IMR-90 (cell line): ENCODE measurements at regions of chr12 and their contacts with region 1.

Region 1: GRCh38 chr12:96219698-96220206 is 25.6 kb downstream of the ELK3 start:
- DNase-seq: peak; percentile 98
- ATAC-seq: peak; percentile 96
- H3K4me3 ChIP-seq: no peak overlapping the region
- H3K27ac ChIP-seq: peak overlapping the region; percentile 83
- H3K4me1 ChIP-seq: peaks cover 14% of the 10 kb centered on the region
- H3K27me3 ChIP-seq: no peaks in the 10 kb centered on the region
- CTCF ChIP-seq: no peak
- POLR2A ChIP-seq: peak; percentile 60; the same call in 1 of the 2 replicates
- RAD21 ChIP-seq: peak; percentile 27

Region 2: GRCh38 chr12:95623585-95624042 is 596.1 kb before region 1 on chr12:
- CTCF ChIA-PET with region 1: no interaction called
- POLR2A ChIA-PET with region 1: no interaction called
- dilution Hi-C with region 1: no loop called
- in situ Hi-C with region 1: loop called (anchors 25 kb)
- intact Hi-C with region 1: no loop called
- DNase-seq: peak; percentile 89
- ATAC-seq: peak; percentile 95
- H3K4me3 ChIP-seq: no peak overlapping the region
- H3K27ac ChIP-seq: peak overlapping the region; percentile 31; the same call in 1 of the 2 replicates
- H3K4me1 ChIP-seq: peaks cover 3% of the 10 kb centered on the region
- H3K27me3 ChIP-seq: no peaks in the 10 kb centered on the region
- CTCF ChIP-seq: peak; percentile 77
- POLR2A ChIP-seq: no peak
- RAD21 ChIP-seq: peak; percentile 73

Region 3: GRCh38 chr12:95918194-95918993 is 301.4 kb before region 1 on chr12:
- CTCF ChIA-PET with region 1: no interaction called
- POLR2A ChIA-PET with region 1: no interaction called
- dilution Hi-C with region 1: no loop called
- in situ Hi-C with region 1: no loop called
- intact Hi-C with region 1: loop called (anchors 2 kb)
- DNase-seq: peak; percentile 42
- ATAC-seq: peak; percentile 98
- H3K4me3 ChIP-seq: no peak overlapping the region
- H3K27ac ChIP-seq: no peak overlapping the region
- H3K4me1 ChIP-seq: no peaks in the 10 kb centered on the region
- H3K27me3 ChIP-seq: peaks cover 7% of the 10 kb centered on the region
- CTCF ChIP-seq: peak; percentile 73
- POLR2A ChIP-seq: no peak
- RAD21 ChIP-seq: peak; percentile 66

Region 4: DNA sequence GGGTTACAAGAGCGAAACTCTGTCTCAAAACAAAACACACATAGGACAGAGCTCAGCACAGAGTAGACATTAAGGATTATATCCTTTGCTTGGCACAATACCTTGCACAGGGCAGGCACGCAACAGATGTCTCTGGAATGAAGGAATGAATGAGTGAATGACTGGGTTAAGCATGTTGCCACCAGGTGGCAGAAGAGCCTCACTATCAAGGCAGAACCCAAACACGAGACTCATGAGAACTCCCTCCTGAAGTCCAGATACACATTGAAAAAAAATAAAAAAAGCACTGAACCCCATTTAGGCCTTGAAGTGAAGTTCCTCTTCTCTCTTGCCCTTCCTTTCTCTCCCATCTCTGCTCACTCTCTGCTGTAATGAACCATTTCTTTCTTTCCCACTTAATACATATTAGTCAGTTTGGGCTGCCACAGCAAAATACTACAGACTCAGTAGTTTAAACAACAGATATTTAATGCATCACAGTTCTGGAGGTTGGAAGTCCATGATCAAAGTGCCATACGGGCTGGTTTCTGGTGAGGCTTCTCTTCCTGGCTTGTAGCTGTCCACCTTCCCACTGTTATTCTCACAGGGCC is 157.8 kb before region 1 on chr12:
- CTCF ChIA-PET with region 1: interaction called, 26 read pairs
- POLR2A ChIA-PET with region 1: no interaction called
- dilution Hi-C with region 1: no loop called
- in situ Hi-C with region 1: loop called (anchors 5 kb)
- intact Hi-C with region 1: loop called (anchors 1 kb)
- DNase-seq: peak; percentile 87
- ATAC-seq: peak; percentile 95
- H3K4me3 ChIP-seq: no peak overlapping the region
- H3K27ac ChIP-seq: no peak overlapping the region
- H3K4me1 ChIP-seq: no peaks in the 10 kb centered on the region
- H3K27me3 ChIP-seq: no peaks in the 10 kb centered on the region
- CTCF ChIP-seq: peak; percentile 93
- POLR2A ChIP-seq: no peak
- RAD21 ChIP-seq: peak; percentile 97

Region 5: DNA sequence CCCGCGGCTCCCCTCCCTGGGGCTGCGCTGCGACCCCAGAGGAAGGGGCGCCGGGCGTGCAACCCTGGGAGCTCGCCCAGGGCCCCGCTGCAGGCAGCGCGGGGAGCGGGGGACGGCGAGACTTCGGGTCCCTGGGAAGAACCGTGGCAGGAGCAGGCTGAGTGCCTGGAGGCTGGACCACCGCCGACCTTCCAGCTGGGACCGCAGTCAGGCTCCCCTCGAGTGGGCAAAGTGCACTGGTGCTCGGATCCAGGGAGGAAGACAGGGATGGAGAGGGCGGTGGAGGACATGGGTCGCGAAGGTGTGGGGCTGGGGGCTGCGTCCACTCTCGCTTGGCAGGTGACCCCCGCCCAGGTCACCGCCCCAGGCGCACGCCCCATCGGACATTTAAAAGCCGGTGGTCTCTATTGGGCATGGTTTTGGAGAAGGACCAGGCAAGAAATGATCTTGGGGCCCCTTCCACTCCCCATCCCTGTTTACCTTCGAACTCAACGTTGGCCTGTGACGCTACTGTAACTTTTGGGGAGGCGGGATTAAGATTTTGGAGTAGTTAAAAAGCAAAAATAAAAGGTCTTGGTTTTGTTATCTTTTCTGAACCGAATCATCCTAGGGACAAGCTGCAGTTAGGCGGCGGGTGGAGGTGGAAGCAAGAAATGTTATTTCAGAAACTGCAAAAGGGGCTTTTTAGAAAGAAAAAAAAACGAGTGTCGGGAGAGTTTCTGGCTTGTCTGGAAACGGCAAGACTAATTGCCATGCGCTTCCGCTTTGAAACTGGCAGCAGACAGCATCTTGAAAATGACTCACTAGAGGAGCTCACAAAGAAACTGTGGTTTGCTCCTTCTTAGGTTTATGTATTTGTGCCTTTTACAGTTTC is 24.5 kb before region 1 on chr12:
- CTCF ChIA-PET with region 1: interaction called, 10 read pairs
- POLR2A ChIA-PET with region 1: no interaction called
- dilution Hi-C with region 1: no loop called
- in situ Hi-C with region 1: no loop called
- intact Hi-C with region 1: no loop called
- DNase-seq: peak; percentile 91
- ATAC-seq: peak; percentile 8
- H3K4me3 ChIP-seq: peak overlapping the region; percentile 97
- H3K27ac ChIP-seq: peak overlapping the region; percentile 92
- H3K4me1 ChIP-seq: peaks cover 5% of the 10 kb centered on the region
- H3K27me3 ChIP-seq: no peaks in the 10 kb centered on the region
- CTCF ChIP-seq: no peak
- POLR2A ChIP-seq: peak; percentile 75
- RAD21 ChIP-seq: no peak